ENCODE measurements at regions of chr22 and their contacts with region 1.

Region 1: GRCh38 chr22:38422611-38423511 is 32.1 kb downstream of the KCNJ4 start:
- DNase-seq: no peak
- H3K4me3 ChIP-seq: no peak overlapping the region
- H3K27me3 ChIP-seq: 0 out of 2 replicates have a peak, but pooled peaks cover 3% of the 10 kb centered on the region
- CTCF ChIP-seq: no peak

Region 2: DNA sequence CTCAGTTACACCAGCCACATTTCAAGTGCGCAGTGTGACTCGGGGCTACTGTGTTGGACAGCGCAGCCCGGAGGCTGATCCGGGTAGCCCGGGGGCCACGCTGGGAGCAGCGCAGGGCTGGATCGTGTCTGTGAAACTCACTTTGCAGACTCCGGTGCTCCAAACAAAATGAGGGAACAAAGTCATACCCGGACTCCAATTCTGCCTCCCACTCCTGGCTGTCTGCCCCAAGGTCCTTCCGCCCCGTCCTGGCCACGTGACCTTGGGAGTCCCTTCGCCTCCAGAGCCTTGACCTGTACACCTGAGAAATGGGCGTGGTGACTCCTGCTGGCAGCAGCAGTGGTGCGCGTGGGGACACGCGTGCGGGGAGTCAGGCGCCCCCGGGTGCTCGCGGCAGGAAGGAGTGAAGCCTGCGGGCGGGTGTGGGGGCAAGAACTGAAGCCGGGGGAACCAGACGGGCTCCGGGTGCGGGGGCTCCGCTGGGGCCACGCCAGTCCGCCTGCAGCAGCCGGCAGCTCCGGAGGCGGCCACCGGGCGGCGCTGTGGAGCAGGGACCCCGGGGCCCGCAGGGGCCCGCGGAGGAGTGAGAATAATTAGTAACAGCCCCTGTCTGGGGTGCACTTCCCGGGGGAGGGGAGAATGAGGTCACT is 10.3 kb before region 1 on chr22:
- CTCF ChIA-PET with region 1: interaction called, 11 read pairs
- POLR2A ChIA-PET with region 1: no interaction called
- DNase-seq: no peak
- H3K4me3 ChIP-seq: no peak overlapping the region
- H3K27me3 ChIP-seq: 0 out of 2 replicates have a peak, but pooled peaks cover 3% of the 10 kb centered on the region
- CTCF ChIP-seq: peak; percentile 62

Region 3: GRCh38 chr22:38569972-38570778 is 147.3 kb after region 1 on chr22 and contains the start of gene DMC1:
- CTCF ChIA-PET with region 1: interaction called, 3 read pairs
- POLR2A ChIA-PET with region 1: interaction called, 12 read pairs
- DNase-seq: no peak
- H3K4me3 ChIP-seq: peak within 1 kb of the TSS; percentile 52
- H3K27me3 ChIP-seq: no peaks in the 10 kb centered on the region
- CTCF ChIP-seq: 0 out of 2 replicates have a peak, but pooled peaks have one; percentile 13
- polyA plus RNA-seq, gene DMC1: 0.37 and 0.97 TPM in 2 replicates